ENCODE measurements at regions of chr1 and their contacts with region 1.

Region 1: DNA sequence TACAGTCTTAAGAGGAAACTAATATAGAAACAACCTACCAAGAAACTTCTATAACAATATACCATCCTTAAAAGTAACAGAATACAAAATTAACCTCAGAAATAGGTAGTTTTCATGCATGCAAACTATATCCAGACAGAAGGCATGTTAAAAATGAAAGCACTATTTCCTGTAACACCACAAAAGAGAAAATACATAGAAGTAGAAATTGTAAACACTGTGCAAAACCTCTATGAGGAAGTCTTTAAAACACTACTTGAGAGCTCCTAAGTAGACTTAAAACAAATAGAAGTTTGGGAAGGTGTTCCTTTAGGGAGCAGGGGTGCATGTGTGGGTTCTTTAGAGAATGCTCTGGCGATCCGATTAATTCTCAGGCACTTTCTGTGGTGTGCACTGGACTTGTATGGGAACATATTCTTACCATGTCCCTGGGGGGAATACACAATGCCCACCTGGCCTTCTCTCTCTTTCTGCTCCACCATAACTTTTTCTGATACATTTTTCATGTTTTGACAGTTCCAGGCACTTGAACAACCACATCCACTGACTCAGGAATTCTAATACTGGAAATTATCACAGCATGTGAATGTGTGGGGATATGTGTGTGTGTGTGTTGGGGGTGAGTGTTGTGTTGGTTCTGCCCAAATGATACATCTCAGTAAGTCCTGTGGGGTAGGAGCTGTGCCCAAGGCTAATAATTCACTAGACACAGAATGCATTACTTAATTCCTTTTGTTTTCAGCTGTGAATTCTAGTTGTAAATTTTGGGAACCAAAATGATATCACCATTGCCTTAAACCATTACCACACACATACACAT is 866.3 kb upstream of the B3GALT2 start:
- DNase-seq: no peak
- ATAC-seq: no peak
- H3K4me3 ChIP-seq: no peak overlapping the region
- H3K27ac ChIP-seq: no peak overlapping the region
- H3K4me1 ChIP-seq: peaks cover 0 to 18% (median 6%) of the 10 kb centered on the region in 9 donors
- H3K27me3 ChIP-seq: no peaks in the 10 kb centered on the region
- CTCF ChIP-seq: no peak

Region 2: GRCh38 chr1:193589597-193590040 is 463.1 kb before region 1 on chr1:
- intact Hi-C with region 1: loop called in 1 of 10 experiments (anchors 5 kb)
- DNase-seq: peak; percentile 11 to 16
- ATAC-seq: peak; percentile 52 to 86 (median 78)
- H3K4me3 ChIP-seq: peak overlapping the region in 1 of 10 donors; percentile 10
- H3K27ac ChIP-seq: peak overlapping the region in 9 of 10 donors; percentile 8 to 74 (median 62)
- H3K4me1 ChIP-seq: peaks cover 0 to 48% (median 11%) of the 10 kb centered on the region in 9 donors
- H3K27me3 ChIP-seq: no peaks in the 10 kb centered on the region
- CTCF ChIP-seq: no peak

Region 3: GRCh38 chr1:193856261-193856660 is 196.5 kb before region 1 on chr1:
- intact Hi-C with region 1: no loop called
- DNase-seq: no peak
- ATAC-seq: no peak
- H3K4me3 ChIP-seq: no peak overlapping the region
- H3K27ac ChIP-seq: no peak overlapping the region
- H3K4me1 ChIP-seq: no peaks in the 10 kb centered on the region
- H3K27me3 ChIP-seq: no peaks in the 10 kb centered on the region
- CTCF ChIP-seq: no peak

Region 4: GRCh38 chr1:193971595-193971994 is 81.1 kb before region 1 on chr1:
- intact Hi-C with region 1: loop called in 1 of 10 experiments (anchors 10 kb)
- DNase-seq: no peak
- ATAC-seq: peak in 5 of 8 donors; percentile 33 to 86 (median 47)
- H3K4me3 ChIP-seq: no peak overlapping the region
- H3K27ac ChIP-seq: peak overlapping the region in 5 of 10 donors; percentile 5 to 57 (median 45)
- H3K4me1 ChIP-seq: no peaks in the 10 kb centered on the region
- H3K27me3 ChIP-seq: no peaks in the 10 kb centered on the region
- CTCF ChIP-seq: no peak

Region 5: DNA sequence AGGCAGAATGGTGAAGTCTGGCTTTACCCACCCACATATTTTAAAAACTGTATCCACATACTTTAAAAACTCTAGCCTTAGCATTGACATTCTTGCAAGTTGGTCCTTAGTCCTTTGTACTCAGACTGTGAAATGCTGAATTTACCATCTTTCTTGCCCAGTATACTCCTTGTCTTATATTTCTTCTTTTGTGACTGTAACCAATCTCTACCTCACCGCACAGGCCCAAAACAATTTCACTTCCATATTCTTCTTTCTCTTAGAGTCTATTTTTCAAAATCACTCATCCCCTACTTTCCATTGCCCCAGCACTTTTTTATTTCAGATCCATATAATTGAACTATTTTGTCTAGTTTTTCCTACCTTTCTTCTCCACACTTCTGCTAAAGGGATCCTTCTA is 26.0 kb after region 1 on chr1:
- intact Hi-C with region 1: no loop called
- DNase-seq: no peak
- ATAC-seq: no peak
- H3K4me3 ChIP-seq: no peak overlapping the region
- H3K27ac ChIP-seq: no peak overlapping the region
- H3K4me1 ChIP-seq: no peaks in the 10 kb centered on the region
- H3K27me3 ChIP-seq: no peaks in the 10 kb centered on the region
- CTCF ChIP-seq: no peak